ENCODE measurements at regions of chr1 and their contacts with region 1.

Region 1: DNA sequence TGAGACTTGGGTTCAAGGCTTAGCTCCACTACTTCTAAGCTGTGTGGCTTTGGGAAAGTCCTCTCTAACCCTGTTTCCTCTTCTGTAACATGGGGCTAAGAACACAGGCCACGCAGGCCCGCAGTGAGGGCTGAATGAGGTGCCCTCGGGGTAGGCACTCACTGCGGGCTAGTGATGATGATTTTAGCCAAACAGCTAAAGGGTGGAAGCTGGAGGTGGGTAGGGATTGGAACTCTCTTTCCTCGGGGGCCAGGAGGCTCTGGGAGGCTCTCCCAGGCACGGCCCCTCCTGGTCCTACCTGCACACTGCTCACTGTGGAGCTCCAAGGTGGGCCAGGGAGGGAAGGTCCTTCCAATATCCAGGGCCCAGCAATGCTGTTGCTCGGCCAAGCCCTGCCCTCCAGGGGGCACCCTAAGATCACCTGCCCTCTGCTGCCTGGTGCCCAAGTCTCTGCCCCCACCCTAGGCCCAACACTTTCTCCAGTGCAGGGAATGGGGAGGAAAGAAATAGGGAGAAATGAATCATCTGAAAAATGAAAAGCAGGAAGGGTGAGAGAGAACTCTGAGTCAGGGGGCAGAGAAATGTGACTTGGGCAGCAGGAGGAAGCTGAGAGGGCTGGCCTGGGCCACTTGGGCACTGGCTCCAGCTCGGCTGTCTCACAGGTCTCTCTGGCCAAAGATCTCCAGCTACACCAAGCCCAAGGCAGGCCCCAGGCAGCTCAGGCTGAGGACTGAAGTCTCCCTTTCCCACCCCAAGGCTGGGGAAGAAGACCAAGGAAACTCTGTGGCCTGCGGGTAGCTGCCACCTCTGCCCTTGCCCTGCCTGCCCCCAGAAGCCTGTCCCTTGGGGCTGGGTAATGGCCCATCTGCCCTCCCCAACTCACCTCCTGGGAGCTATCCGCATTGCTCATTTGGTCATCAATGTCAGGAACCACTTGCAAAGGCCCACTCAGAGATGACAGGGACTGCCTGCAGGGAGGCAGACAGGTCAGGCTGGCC is 19.3 kb upstream of the EVA1B start:
- DNase-seq: peak; percentile 49 to 81 (median 62)
- ATAC-seq: peak; percentile 84 to 96
- H3K4me3 Mint-ChIP-seq: peak overlapping the region in 1 of 10 donors; percentile 23
- H3K27ac Mint-ChIP-seq: peak overlapping the region in 5 of 10 donors; percentile 66 to 91 (median 85)
- H3K4me1 Mint-ChIP-seq: peaks cover 11 to 28% (median 16%) of the 10 kb centered on the region in 4 donors
- H3K27me3 Mint-ChIP-seq: no peaks in the 10 kb centered on the region

Region 2: DNA sequence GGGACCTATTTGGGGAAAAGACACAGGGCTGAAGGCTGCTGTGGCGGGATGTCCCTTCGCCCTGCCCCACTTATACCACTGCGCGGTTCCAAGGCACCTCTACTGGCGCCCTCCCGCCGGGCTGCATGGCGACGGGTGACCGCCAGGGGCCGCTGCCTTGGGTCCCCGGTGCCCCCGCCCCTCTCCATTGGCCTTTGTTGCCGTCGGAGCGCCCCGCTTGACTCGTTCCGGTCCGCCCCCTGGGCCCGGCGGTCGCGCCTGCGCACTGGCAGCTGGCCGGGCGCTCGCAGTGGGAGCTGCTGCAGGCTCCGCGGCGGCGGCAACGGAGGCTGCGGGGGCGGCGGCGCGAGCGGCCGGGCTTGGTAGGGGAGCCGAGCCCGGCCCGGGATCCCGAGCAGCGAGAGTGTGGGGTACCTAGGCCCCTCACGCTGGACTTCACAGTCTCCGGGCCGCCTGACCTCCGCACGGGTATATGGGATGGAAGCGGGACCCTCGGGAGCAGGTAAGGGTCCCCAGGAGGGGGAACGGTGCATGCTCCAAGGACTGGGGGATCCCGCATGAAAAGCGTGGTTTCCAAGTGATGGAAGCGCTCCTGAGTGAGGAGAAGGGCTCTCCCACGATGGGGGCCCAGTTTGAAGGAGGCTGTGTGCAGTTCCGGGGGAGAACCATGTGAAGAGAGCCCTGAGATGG is 459.7 kb before region 1 on chr1 and contains the start of gene AGO1:
- POLR2A ChIA-PET with region 1: no interaction called
- DNase-seq: peak; percentile 93 to 99 (median 98)
- ATAC-seq: peak; percentile 94
- H3K4me3 Mint-ChIP-seq: peak within 1 kb of the TSS; percentile 91 to 99 (median 93)
- H3K27ac Mint-ChIP-seq: peak within 1 kb of the TSS; percentile 53 to 93 (median 90)
- H3K4me1 Mint-ChIP-seq: peaks cover 29 to 58% (median 52%) of the 10 kb centered on the region in 4 donors
- H3K27me3 Mint-ChIP-seq: no peaks in the 10 kb centered on the region
- polyA plus RNA-seq, gene AGO1: 6.1 to 9.9 (median 7.9) TPM

Region 3: GRCh38 chr1:36420836-36421664 is 78.3 kb after region 1 on chr1:
- POLR2A ChIA-PET with region 1: interaction called, 12 read pairs
- DNase-seq: peak; percentile 80 to 93 (median 86)
- ATAC-seq: peak; percentile 98 to 99
- H3K4me3 Mint-ChIP-seq: peak overlapping the region; percentile 30 to 82 (median 72)
- H3K27ac Mint-ChIP-seq: peak overlapping the region; percentile 90 to 98 (median 94)
- H3K4me1 Mint-ChIP-seq: peaks cover 14 to 27% (median 19%) of the 10 kb centered on the region in 4 donors
- H3K27me3 Mint-ChIP-seq: no peaks in the 10 kb centered on the region